WTC11 (cell line): ENCODE measurements at regions of chr15 and their contacts with region 1.

Region 1: GRCh38 chr15:26095710-26096330 is 232.7 kb upstream of the ATP10A start:
- DNase-seq: peak; percentile 73
- ATAC-seq: peak; percentile 97
- H3K4me3 Mint-ChIP-seq: no peak overlapping the region; the same call in 1 of the 2 replicates
- H3K27ac Mint-ChIP-seq: 0 out of 2 replicates have a peak overlapping the region, but pooled peaks have one; percentile 67
- H3K4me1 Mint-ChIP-seq: peaks cover 16% of the 10 kb centered on the region
- H3K27me3 Mint-ChIP-seq: no peaks in the 10 kb centered on the region; the same call in 1 of the 2 replicates
- CTCF ChIP-seq: peak; percentile 57; the same call in 1 of the 2 replicates

Region 2: GRCh38 chr15:25947323-25948314 is 148.2 kb before region 1 on chr15:
- CTCF ChIA-PET with region 1: interaction called, 23 read pairs
- POLR2A ChIA-PET with region 1: no interaction called
- DNase-seq: peak; percentile 51
- ATAC-seq: no peak
- H3K4me3 Mint-ChIP-seq: peak overlapping the region; percentile 25; the same call in 1 of the 2 replicates
- H3K27ac Mint-ChIP-seq: peak overlapping the region; percentile 60; the same call in 1 of the 2 replicates
- H3K4me1 Mint-ChIP-seq: peaks cover 15% of the 10 kb centered on the region
- H3K27me3 Mint-ChIP-seq: no peaks in the 10 kb centered on the region
- CTCF ChIP-seq: no peak

Region 3: GRCh38 chr15:25971053-25971452 is 124.8 kb before region 1 on chr15:
- CTCF ChIA-PET with region 1: no interaction called
- POLR2A ChIA-PET with region 1: no interaction called
- DNase-seq: no peak
- ATAC-seq: no peak
- H3K4me3 Mint-ChIP-seq: no peak overlapping the region
- H3K27ac Mint-ChIP-seq: no peak overlapping the region
- H3K4me1 Mint-ChIP-seq: no peaks in the 10 kb centered on the region
- H3K27me3 Mint-ChIP-seq: peaks cover 4% of the 10 kb centered on the region; the same call in 1 of the 2 replicates
- CTCF ChIP-seq: no peak

Region 4: DNA sequence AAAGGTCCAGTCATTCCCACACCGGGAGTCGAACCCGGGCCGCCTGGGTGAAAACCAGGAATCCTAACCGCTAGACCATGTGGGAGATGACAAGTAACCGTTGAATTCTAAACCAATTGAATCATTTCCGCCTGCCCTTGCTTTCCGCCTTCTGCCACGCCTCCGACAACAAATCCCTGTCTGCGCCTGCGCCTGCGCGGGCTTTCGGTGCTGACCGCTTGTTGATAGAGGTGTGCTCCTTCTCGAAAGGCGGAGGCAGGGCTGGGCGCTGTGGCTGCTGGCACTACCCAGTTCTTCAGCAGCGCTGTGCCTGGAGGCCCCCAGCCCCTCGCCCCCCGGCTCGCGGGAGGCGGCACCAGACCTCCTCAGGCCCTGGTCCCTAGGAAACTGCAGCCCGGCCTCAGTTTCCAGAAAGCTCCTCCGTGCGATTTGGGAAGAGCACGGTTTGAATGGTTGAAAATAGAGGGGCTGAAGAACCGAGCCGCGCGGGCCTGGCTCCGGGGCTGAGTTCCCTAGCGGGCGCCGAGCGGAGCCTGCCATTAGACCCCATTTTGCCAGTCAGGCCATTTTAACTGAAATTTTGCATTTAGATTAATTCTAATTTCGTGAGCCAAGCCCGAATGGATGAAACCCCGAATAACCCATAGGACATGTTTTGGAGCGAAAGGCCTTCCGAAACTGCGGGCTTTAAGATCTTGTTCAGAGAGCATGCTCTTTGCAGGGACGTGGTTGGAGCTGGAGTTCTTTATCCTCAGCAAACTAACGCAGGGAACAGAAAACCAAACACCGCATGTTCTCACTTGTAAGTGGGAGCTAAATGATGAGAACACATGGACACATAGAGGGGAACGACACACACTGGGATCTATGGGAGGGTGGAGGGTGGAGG is 13.4 kb before region 1 on chr15:
- CTCF ChIA-PET with region 1: interaction called, 23 read pairs
- POLR2A ChIA-PET with region 1: interaction called, 5 read pairs
- DNase-seq: peak; percentile 97
- ATAC-seq: peak; percentile 97
- H3K4me3 Mint-ChIP-seq: peak overlapping the region; percentile 76
- H3K27ac Mint-ChIP-seq: peak overlapping the region; percentile 97
- H3K4me1 Mint-ChIP-seq: peaks cover 29% of the 10 kb centered on the region
- H3K27me3 Mint-ChIP-seq: no peaks in the 10 kb centered on the region; the same call in 1 of the 2 replicates
- CTCF ChIP-seq: no peak

Region 5: GRCh38 chr15:26126819-26127387 is 31.1 kb after region 1 on chr15:
- CTCF ChIA-PET with region 1: interaction called, 12 read pairs
- POLR2A ChIA-PET with region 1: no interaction called
- DNase-seq: no peak
- ATAC-seq: no peak
- H3K4me3 Mint-ChIP-seq: no peak overlapping the region
- H3K27ac Mint-ChIP-seq: no peak overlapping the region
- H3K4me1 Mint-ChIP-seq: peaks cover 50% of the 10 kb centered on the region
- H3K27me3 Mint-ChIP-seq: peaks cover 6% of the 10 kb centered on the region
- CTCF ChIP-seq: no peak

Region 6: DNA sequence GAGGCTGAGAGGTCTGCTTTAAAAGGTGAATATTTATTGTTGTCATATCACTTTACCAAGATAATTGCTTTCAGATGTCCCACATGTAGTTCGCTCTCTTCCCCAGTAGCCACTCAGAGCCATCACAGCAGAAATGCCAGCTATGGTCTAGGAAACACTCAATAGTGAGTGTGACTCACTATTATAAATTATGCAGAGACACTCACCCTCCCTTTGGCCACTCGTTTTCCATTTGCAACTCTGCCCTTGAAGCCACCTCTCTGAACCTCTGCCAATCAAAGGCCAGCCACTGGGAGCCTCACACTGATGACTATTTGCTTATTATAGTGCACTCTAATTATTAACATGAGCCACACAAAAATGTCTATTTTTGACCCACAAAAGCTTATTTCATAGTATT is 95.4 kb after region 1 on chr15:
- CTCF ChIA-PET with region 1: no interaction called
- POLR2A ChIA-PET with region 1: no interaction called
- DNase-seq: no peak
- ATAC-seq: no peak
- H3K4me3 Mint-ChIP-seq: no peak overlapping the region
- H3K27ac Mint-ChIP-seq: no peak overlapping the region
- H3K4me1 Mint-ChIP-seq: peaks cover 40% of the 10 kb centered on the region
- H3K27me3 Mint-ChIP-seq: no peaks in the 10 kb centered on the region
- CTCF ChIP-seq: no peak

Region 7: GRCh38 chr15:26260517-26261133 is 164.8 kb after region 1 on chr15:
- CTCF ChIA-PET with region 1: interaction called, 11 read pairs
- POLR2A ChIA-PET with region 1: no interaction called
- DNase-seq: peak; percentile 71
- ATAC-seq: peak; percentile 98
- H3K4me3 Mint-ChIP-seq: no peak overlapping the region
- H3K27ac Mint-ChIP-seq: no peak overlapping the region
- H3K4me1 Mint-ChIP-seq: peaks cover 20% of the 10 kb centered on the region
- H3K27me3 Mint-ChIP-seq: no peaks in the 10 kb centered on the region
- CTCF ChIP-seq: peak; percentile 81